ENCODE measurements at regions of chr13 and their contacts with region 1.

Region 1: GRCh38 chr13:75870397-75870903 is 234.3 kb downstream of the LMO7 start:
- DNase-seq: no peak
- H3K4me3 ChIP-seq: peak overlapping the region in 1 of 4 donors; percentile 16
- H3K27ac ChIP-seq: no peak overlapping the region
- H3K4me1 ChIP-seq: no peaks in the 10 kb centered on the region
- H3K27me3 ChIP-seq: peaks cover 4% of the 10 kb centered on the region
- CTCF ChIP-seq: peak; percentile 27 to 79 (median 62)
- POLR2A ChIP-seq: no peak

Region 2: DNA sequence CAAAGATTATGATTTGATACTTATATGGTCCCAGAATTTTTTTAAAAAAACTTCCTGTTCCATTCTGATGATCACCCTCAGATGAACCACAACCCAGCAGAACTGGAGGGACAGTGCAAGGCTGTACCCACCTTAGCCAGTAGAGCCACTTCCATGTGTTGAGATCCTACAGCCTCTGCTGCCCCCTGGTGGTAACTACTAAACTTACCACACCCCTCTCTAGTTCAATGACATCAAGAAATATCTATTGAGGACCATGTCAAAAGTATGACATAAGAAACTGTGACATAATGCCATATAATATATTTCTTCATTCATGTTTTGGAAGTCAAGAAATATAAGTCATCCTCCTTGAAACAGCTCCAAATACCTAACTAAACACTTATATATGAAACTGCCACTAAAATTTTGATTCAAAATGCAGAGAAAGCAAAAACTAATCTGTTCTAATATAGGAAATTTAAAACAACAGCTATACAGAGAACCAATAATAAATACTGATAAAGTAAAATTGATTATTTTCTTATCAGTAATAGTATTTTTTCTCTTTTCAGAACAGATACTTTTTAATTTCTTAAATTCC is 603.2 kb after region 1 on chr13:
- intact Hi-C with region 1: loop called (anchors 5 kb)
- DNase-seq: peak; percentile 66 to 89 (median 72)
- H3K4me3 ChIP-seq: no peak overlapping the region
- H3K27ac ChIP-seq: no peak overlapping the region
- H3K4me1 ChIP-seq: no peaks in the 10 kb centered on the region
- H3K27me3 ChIP-seq: no peaks in the 10 kb centered on the region
- CTCF ChIP-seq: peak; percentile 76 to 93 (median 88)
- POLR2A ChIP-seq: no peak

Region 3: DNA sequence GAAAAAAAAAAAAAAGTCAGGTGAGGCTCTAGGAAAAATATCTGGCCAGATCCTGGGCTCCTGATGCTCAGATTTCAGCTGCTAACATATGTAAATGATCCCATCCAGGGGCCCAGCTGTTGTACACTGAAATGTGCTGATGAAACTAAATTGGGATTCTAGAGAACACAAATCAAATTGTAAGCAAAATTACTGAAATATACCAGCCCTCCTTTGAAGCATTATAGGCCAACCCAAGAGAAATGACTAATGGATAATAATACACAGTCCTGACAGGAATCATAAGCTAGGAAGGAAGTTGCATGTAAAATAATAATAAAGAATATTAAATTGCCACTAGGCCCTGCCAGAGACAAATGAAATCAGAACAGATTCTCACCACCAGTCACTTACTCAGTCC is 997.9 kb after region 1 on chr13:
- intact Hi-C with region 1: no loop called
- DNase-seq: no peak
- H3K4me3 ChIP-seq: no peak overlapping the region
- H3K27ac ChIP-seq: no peak overlapping the region
- H3K4me1 ChIP-seq: no peaks in the 10 kb centered on the region
- H3K27me3 ChIP-seq: no peaks in the 10 kb centered on the region
- CTCF ChIP-seq: no peak
- POLR2A ChIP-seq: no peak

Measured in adrenal gland (tissue), 19 donors.